ENCODE measurements at regions of chr3 and their contacts with region 1.

Region 1: GRCh38 chr3:38738630-38739395 is 77.2 kb downstream of the SCN10A start:
- DNase-seq: no peak
- H3K4me3 ChIP-seq: no peak overlapping the region
- CTCF ChIP-seq: peak; percentile 84

Region 2: GRCh38 chr3:38843898-38844297 is 105.1 kb after region 1 on chr3:
- CTCF ChIA-PET with region 1: interaction called, 28 read pairs
- POLR2A ChIA-PET with region 1: no interaction called
- DNase-seq: no peak
- H3K4me3 ChIP-seq: no peak overlapping the region
- CTCF ChIP-seq: peak; percentile 61

Region 3: GRCh38 chr3:39028546-39028945 is 289.7 kb after region 1 on chr3:
- CTCF ChIA-PET with region 1: interaction called, 13 read pairs
- POLR2A ChIA-PET with region 1: no interaction called
- DNase-seq: no peak
- H3K4me3 ChIP-seq: no peak overlapping the region
- CTCF ChIP-seq: no peak